ENCODE measurements at regions of chr11 and their contacts with region 1.

Region 1: GRCh38 chr11:123020968-123021367 is 39.3 kb upstream of the BSX start:
- DNase-seq: peak; percentile 84
- H3K4me3 ChIP-seq: no peak overlapping the region
- H3K27ac ChIP-seq: no peak overlapping the region
- H3K4me1 ChIP-seq: no peaks in the 10 kb centered on the region
- H3K27me3 ChIP-seq: no peaks in the 10 kb centered on the region
- CTCF ChIP-seq: peak; percentile 77

Region 2: GRCh38 chr11:122772945-122773344 is 248.0 kb before region 1 on chr11:
- CTCF ChIA-PET with region 1: interaction called, 5 read pairs
- POLR2A ChIA-PET with region 1: interaction called, 12 read pairs
- intact Hi-C with region 1: no loop called
- DNase-seq: no peak
- H3K4me3 ChIP-seq: no peak overlapping the region
- H3K27ac ChIP-seq: no peak overlapping the region
- H3K4me1 ChIP-seq: no peaks in the 10 kb centered on the region
- H3K27me3 ChIP-seq: no peaks in the 10 kb centered on the region
- CTCF ChIP-seq: no peak

Region 3: DNA sequence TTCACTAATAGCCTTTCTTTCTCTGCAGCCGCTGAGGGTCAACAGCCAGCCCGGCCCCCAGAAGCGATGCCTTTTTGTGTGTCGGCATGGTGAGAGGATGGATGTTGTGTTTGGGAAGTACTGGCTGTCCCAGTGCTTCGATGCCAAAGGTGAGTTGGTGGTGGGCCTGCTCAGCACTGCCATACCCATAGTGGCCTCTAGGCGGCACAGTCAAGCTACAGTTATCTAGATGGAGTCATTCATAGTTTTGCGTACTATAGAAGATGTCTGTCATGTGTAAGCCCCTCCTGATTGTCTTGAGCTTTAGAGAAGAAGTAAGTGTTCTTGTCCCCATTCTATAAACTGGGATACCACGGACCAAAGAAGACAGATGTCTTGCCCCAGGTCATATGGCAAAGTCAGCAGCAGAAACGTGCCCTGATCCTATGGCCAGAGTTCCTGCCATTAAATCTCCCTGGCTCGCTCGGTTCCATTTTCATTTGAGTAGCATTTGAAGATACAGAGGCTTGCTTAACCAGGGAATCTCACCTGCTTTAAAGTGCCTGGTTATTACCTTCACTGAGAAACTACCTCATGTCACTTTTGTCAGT is 224.7 kb before region 1 on chr11:
- CTCF ChIA-PET with region 1: interaction called, 5 read pairs
- POLR2A ChIA-PET with region 1: no interaction called
- intact Hi-C with region 1: loop called (anchors 5 kb)
- DNase-seq: peak; percentile 79
- H3K4me3 ChIP-seq: no peak overlapping the region
- H3K27ac ChIP-seq: no peak overlapping the region
- H3K4me1 ChIP-seq: no peaks in the 10 kb centered on the region
- H3K27me3 ChIP-seq: no peaks in the 10 kb centered on the region
- CTCF ChIP-seq: peak; percentile 98

Region 4: DNA sequence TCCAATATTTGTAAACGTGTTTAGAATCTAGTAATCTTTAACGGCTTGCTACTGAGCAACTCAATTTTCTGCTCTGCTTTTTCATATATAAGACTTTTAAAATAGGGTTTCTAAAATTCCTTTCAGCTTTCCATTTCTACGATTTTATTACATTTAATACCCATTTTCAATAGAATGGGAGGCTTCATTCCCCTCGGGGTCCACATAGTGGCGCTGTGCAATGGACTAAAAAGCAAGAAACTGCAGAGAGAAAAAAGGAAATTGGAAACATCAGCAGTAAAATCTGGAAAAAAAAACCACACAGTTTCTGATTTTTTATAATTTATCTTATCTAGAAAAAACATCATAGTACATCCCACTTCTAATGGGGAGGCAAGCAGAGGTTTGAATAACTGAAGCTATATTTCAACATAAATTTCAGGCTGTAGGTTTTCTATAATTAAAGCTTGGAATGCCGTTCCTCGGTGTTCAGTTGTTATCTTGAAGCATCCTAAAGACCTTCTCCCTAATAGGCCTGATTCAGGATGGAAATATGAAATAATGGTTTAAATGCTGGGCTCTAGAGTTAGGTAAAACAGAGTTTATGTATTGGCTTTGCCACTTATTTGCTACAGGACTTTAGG is 157.2 kb before region 1 on chr11:
- CTCF ChIA-PET with region 1: interaction called, 18 read pairs
- POLR2A ChIA-PET with region 1: no interaction called
- intact Hi-C with region 1: loop called (anchors 1 kb)
- DNase-seq: peak; percentile 71
- H3K4me3 ChIP-seq: no peak overlapping the region
- H3K27ac ChIP-seq: no peak overlapping the region
- H3K4me1 ChIP-seq: no peaks in the 10 kb centered on the region
- H3K27me3 ChIP-seq: no peaks in the 10 kb centered on the region
- CTCF ChIP-seq: peak; percentile 99

Region 5: DNA sequence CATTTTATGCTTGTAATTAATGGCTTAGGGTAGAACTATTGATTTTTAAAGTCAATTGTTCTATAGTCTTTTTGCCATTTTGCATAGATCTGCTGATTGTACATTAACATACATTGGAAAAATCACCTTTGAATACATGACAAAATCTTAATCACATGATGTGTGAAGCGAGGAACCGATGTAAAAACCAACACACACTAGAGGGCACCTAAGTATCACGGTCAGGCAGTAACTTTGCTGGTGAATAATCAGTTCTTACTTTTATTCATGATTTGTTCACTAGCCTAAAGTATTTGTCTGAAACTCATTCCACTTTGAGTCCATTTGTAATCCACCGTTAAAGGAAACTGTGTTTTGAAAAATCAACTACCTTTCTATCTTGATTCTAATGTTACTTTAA is 110.2 kb before region 1 on chr11:
- CTCF ChIA-PET with region 1: interaction called, 4 read pairs
- POLR2A ChIA-PET with region 1: no interaction called
- intact Hi-C with region 1: loop called (anchors 1 kb)
- DNase-seq: peak; percentile 45
- H3K4me3 ChIP-seq: no peak overlapping the region
- H3K27ac ChIP-seq: no peak overlapping the region
- H3K4me1 ChIP-seq: no peaks in the 10 kb centered on the region
- H3K27me3 ChIP-seq: no peaks in the 10 kb centered on the region
- CTCF ChIP-seq: peak; percentile 54; the same call in 1 of the 2 replicates

Region 6: GRCh38 chr11:122995526-122995925 is 25.4 kb before region 1 on chr11:
- CTCF ChIA-PET with region 1: interaction called, 10 read pairs
- POLR2A ChIA-PET with region 1: no interaction called
- intact Hi-C with region 1: no loop called
- DNase-seq: no peak
- H3K4me3 ChIP-seq: no peak overlapping the region
- H3K27ac ChIP-seq: no peak overlapping the region
- H3K4me1 ChIP-seq: no peaks in the 10 kb centered on the region
- H3K27me3 ChIP-seq: peaks cover 35% of the 10 kb centered on the region
- CTCF ChIP-seq: no peak

Region 7: GRCh38 chr11:123054301-123055065 is 33.5 kb after region 1 on chr11:
- CTCF ChIA-PET with region 1: interaction called, 6 read pairs
- POLR2A ChIA-PET with region 1: interaction called, 11 read pairs
- intact Hi-C with region 1: no loop called
- DNase-seq: peak; percentile 94
- H3K4me3 ChIP-seq: no peak overlapping the region
- H3K27ac ChIP-seq: no peak overlapping the region
- H3K4me1 ChIP-seq: peaks cover 28% of the 10 kb centered on the region
- H3K27me3 ChIP-seq: no peaks in the 10 kb centered on the region
- CTCF ChIP-seq: peak; percentile 87